ENCODE measurements at regions of chr5 and their contacts with region 1.

Region 1: GRCh38 chr5:170070556-170071412 is 34.9 kb upstream of the FOXI1 start:
- DNase-seq: no peak
- ATAC-seq: no peak
- H3K4me3 ChIP-seq: no peak overlapping the region
- H3K4me3 Mint-ChIP-seq: no peak overlapping the region
- H3K27ac ChIP-seq: no peak overlapping the region
- H3K27ac Mint-ChIP-seq: no peak overlapping the region
- H3K4me1 ChIP-seq: no peaks in the 10 kb centered on the region
- H3K4me1 Mint-ChIP-seq: no peaks in the 10 kb centered on the region
- H3K27me3 ChIP-seq: no peaks in the 10 kb centered on the region
- H3K27me3 Mint-ChIP-seq: no peaks in the 10 kb centered on the region
- CTCF ChIP-seq: peak; percentile 44

Region 2: GRCh38 chr5:170057301-170057700 is 13.5 kb before region 1 on chr5:
- CTCF ChIA-PET with region 1: interaction called, 11 read pairs
- POLR2A ChIA-PET with region 1: no interaction called
- intact Hi-C with region 1: no loop called
- DNase-seq: no peak
- ATAC-seq: no peak
- H3K4me3 ChIP-seq: no peak overlapping the region
- H3K4me3 Mint-ChIP-seq: no peak overlapping the region
- H3K27ac ChIP-seq: no peak overlapping the region
- H3K27ac Mint-ChIP-seq: no peak overlapping the region
- H3K4me1 ChIP-seq: no peaks in the 10 kb centered on the region
- H3K4me1 Mint-ChIP-seq: no peaks in the 10 kb centered on the region
- H3K27me3 ChIP-seq: no peaks in the 10 kb centered on the region
- H3K27me3 Mint-ChIP-seq: no peaks in the 10 kb centered on the region
- CTCF ChIP-seq: no peak

Region 3: DNA sequence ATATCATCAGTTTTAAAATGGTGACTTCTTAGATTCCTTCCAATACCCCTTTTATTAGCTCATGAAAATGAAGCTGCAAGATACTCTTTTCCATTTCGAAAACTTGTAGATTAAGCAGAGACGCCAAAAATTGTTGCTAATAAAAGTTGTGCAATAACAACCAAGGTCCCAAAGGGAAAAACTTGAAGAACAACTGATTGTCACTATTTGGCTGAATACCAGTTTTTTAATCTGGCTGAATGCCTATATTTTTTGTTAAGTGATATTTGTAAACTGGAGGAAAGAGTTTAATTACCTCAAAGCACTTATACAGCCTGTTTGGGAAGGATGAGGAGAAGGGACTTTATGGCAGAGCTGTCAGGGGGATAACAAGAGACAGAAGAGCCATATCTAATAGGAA is 176.6 kb after region 1 on chr5:
- CTCF ChIA-PET with region 1: no interaction called
- POLR2A ChIA-PET with region 1: no interaction called
- intact Hi-C with region 1: no loop called
- DNase-seq: no peak
- ATAC-seq: no peak
- H3K4me3 ChIP-seq: no peak overlapping the region
- H3K4me3 Mint-ChIP-seq: no peak overlapping the region
- H3K27ac ChIP-seq: no peak overlapping the region
- H3K27ac Mint-ChIP-seq: no peak overlapping the region
- H3K4me1 ChIP-seq: no peaks in the 10 kb centered on the region
- H3K4me1 Mint-ChIP-seq: peaks cover 2% of the 10 kb centered on the region
- H3K27me3 ChIP-seq: no peaks in the 10 kb centered on the region
- H3K27me3 Mint-ChIP-seq: peaks cover 4% of the 10 kb centered on the region
- CTCF ChIP-seq: no peak

Measured in B cell (primary cell).